ENCODE measurements at regions of chr1 and their contacts with region 1.

Region 1: GRCh38 chr1:165836664-165837482 is 9.5 kb downstream of the UCK2 start:
- DNase-seq: peak in 1 of 2 donors; percentile 36
- ATAC-seq: peak in 1 of 2 donors; percentile 32
- H3K4me3 ChIP-seq: no peak overlapping the region
- H3K27ac ChIP-seq: peak overlapping the region in 1 of 4 donors; percentile 3
- H3K4me1 ChIP-seq: peaks cover 25 to 30% of the 10 kb centered on the region in 2 donors
- H3K27me3 ChIP-seq: no peaks in the 10 kb centered on the region
- CTCF ChIP-seq: no peak
- POLR2A ChIP-seq: no peak

Region 2: GRCh38 chr1:166379447-166379846 is 542.6 kb after region 1 on chr1:
- in situ Hi-C with region 1: no loop called
- intact Hi-C with region 1: loop called (anchors 5 kb)
- DNase-seq: peak; percentile 88 to 93
- ATAC-seq: peak; percentile 100
- H3K4me3 ChIP-seq: peak overlapping the region in 1 of 4 donors; percentile 17
- H3K27ac ChIP-seq: peak overlapping the region; percentile 74 to 89 (median 83)
- H3K4me1 ChIP-seq: peaks cover 15 to 46% of the 10 kb centered on the region in 2 donors
- H3K27me3 ChIP-seq: no peaks in the 10 kb centered on the region
- CTCF ChIP-seq: no peak
- POLR2A ChIP-seq: no peak

Measured in gastrocnemius medialis (tissue), 4 donors.